ENCODE measurements at regions of chr14 and their contacts with region 1.

Region 1: GRCh38 chr14:100246826-100247428 is 8.0 kb downstream of the YY1 start:
- DNase-seq: peak; percentile 77
- H3K4me3 Mint-ChIP-seq: no peak overlapping the region
- H3K27ac Mint-ChIP-seq: no peak overlapping the region
- H3K4me1 Mint-ChIP-seq: peaks cover 26% of the 10 kb centered on the region
- H3K27me3 Mint-ChIP-seq: no peaks in the 10 kb centered on the region
- CTCF ChIP-seq: peak; percentile 44

Region 2: GRCh38 chr14:100263144-100263543 is 16.2 kb after region 1 on chr14:
- CTCF ChIA-PET with region 1: interaction called, 14 read pairs
- POLR2A ChIA-PET with region 1: interaction called, 3 read pairs
- intact Hi-C with region 1: no loop called
- DNase-seq: no peak
- H3K4me3 Mint-ChIP-seq: no peak overlapping the region
- H3K27ac Mint-ChIP-seq: no peak overlapping the region
- H3K4me1 Mint-ChIP-seq: peaks cover 26% of the 10 kb centered on the region
- H3K27me3 Mint-ChIP-seq: no peaks in the 10 kb centered on the region
- CTCF ChIP-seq: no peak

Region 3: GRCh38 chr14:100362311-100362927 is 115.5 kb after region 1 on chr14:
- CTCF ChIA-PET with region 1: no interaction called
- POLR2A ChIA-PET with region 1: no interaction called
- intact Hi-C with region 1: no loop called
- DNase-seq: no peak
- H3K4me3 Mint-ChIP-seq: no peak overlapping the region
- H3K27ac Mint-ChIP-seq: no peak overlapping the region
- H3K4me1 Mint-ChIP-seq: no peaks in the 10 kb centered on the region
- H3K27me3 Mint-ChIP-seq: no peaks in the 10 kb centered on the region
- CTCF ChIP-seq: no peak

Measured in MCF 10A (cell line).